ENCODE measurements at regions of chr14 and their contacts with region 1.

Region 1: DNA sequence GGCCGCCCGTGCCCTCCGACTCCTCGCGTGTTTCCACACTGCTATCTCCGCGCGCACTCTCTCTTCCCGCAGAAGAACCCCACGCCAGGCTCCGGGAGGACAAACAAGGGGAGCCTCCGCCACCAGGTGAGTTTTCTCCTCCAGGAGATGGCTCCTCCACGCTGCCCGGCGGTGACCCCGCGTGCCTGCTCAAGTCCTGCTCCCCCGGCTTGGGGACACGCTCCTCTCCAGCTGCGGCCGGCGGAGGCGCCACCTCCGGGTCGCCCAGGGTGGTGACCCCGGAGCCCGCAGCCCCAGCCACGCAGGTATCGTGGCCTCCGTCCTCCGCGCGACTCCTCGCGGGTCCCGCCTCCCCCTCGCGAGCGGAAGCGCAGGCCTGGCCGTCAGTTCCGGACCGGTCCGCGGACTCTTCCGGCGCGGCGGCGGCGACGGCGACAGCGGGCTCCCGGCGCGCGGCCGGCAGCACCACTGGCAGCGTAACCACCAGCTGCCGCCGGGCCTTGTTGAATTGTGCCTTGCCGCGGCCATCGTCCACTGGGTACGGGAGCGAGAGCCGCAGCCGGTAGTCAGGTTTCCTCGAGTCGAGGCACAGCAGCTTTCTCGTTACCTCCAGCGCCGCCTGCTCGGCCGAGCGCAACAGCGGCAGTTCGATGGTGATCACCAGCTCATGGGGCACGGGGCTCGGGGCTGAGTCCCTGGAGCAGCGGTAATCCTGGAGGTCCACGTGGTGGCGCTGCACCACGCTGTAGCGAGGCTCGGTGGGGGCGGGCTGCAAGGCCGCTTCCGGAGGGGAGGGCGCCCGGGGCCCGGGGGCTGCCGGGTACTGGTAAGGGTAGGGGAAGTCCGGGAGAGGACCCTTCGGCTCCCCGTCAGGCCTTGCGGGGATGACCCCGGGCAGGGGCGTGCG is 1.2 kb downstream of the DNAAF2 start:
- DNase-seq: peak; percentile 82 to 94
- H3K4me3 ChIP-seq: peak overlapping the region; percentile 89
- H3K27ac ChIP-seq: peak overlapping the region; percentile 89
- H3K4me1 ChIP-seq: peaks cover 36% of the 10 kb centered on the region
- H3K27me3 ChIP-seq: no peaks in the 10 kb centered on the region
- CTCF ChIP-seq: peak; percentile 74

Region 2: GRCh38 chr14:48771717-48772116 is 862.2 kb before region 1 on chr14:
- CTCF ChIA-PET with region 1: no interaction called
- POLR2A ChIA-PET with region 1: no interaction called
- intact Hi-C with region 1: no loop called
- DNase-seq: no peak
- H3K4me3 ChIP-seq: no peak overlapping the region
- H3K27ac ChIP-seq: no peak overlapping the region
- H3K4me1 ChIP-seq: no peaks in the 10 kb centered on the region
- H3K27me3 ChIP-seq: no peaks in the 10 kb centered on the region
- CTCF ChIP-seq: no peak

Region 3: GRCh38 chr14:49620182-49621113 is 13.4 kb before region 1 on chr14 and contains the starts of genes MGAT2 and RPL36AL:
- CTCF ChIA-PET with region 1: interaction called, 10 read pairs
- POLR2A ChIA-PET with region 1: interaction called, 3 read pairs
- intact Hi-C with region 1: no loop called
- DNase-seq: peak; percentile 92 to 98
- H3K4me3 ChIP-seq: peak within 1 kb of the TSS; percentile 100
- H3K27ac ChIP-seq: peak within 1 kb of the TSS; percentile 96
- H3K4me1 ChIP-seq: peaks cover 61% of the 10 kb centered on the region
- H3K27me3 ChIP-seq: no peaks in the 10 kb centered on the region
- CTCF ChIP-seq: no peak
- total RNA-seq, gene MGAT2: 18.9 and 22.0 TPM in 2 replicates
- total RNA-seq, gene RPL36AL: 120 and 151 TPM in 2 replicates

Region 4: DNA sequence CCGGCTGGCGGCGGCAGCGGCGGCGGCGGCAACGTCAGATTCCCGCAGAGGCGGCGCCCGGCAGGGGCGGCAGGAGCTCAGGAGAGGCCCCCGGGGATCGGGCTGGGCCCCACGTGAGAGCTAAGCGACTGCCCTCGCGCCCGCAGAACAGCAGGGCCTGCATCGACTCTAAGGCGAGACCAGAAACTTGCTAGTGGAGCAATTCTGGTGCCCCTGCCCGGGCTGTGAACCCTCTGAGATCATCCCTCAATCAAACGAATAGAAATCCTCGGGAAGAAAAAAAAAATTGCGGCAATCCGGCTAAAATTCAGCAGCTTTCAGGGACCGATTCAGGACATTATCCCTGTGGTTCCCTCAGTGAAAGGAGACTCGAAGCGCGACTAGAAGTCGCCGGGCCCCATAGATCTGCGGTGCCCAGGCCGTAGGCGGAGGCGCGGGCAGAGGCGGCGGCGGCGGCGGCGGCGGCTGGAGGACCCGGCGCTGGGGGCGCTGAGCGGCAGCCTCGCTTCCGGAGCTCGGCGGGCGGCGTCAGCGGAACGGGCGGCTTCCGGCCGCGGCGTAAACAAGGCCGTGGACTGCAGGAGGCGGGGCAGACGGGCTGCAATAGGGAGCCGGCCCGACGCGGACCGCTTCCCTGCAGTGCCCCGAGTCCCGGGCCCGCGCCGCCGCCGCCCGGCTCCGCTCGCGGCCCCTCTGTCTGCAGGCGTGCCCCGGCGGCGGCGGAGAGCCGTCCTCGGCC is 133.8 kb after region 1 on chr14 and contains the start of gene KLHDC2:
- CTCF ChIA-PET with region 1: interaction called, 10 read pairs
- POLR2A ChIA-PET with region 1: interaction called, 10 read pairs
- intact Hi-C with region 1: loop called (anchors 1 kb)
- DNase-seq: peak; percentile 71 to 90
- H3K4me3 ChIP-seq: peak within 1 kb of the TSS; percentile 100
- H3K27ac ChIP-seq: peak within 1 kb of the TSS; percentile 84
- H3K4me1 ChIP-seq: peaks cover 36% of the 10 kb centered on the region
- H3K27me3 ChIP-seq: no peaks in the 10 kb centered on the region
- CTCF ChIP-seq: 0 out of 2 replicates have a peak, but pooled peaks have one; percentile 10
- total RNA-seq, gene KLHDC2: 45.3 and 45.8 TPM in 2 replicates

Region 5: DNA sequence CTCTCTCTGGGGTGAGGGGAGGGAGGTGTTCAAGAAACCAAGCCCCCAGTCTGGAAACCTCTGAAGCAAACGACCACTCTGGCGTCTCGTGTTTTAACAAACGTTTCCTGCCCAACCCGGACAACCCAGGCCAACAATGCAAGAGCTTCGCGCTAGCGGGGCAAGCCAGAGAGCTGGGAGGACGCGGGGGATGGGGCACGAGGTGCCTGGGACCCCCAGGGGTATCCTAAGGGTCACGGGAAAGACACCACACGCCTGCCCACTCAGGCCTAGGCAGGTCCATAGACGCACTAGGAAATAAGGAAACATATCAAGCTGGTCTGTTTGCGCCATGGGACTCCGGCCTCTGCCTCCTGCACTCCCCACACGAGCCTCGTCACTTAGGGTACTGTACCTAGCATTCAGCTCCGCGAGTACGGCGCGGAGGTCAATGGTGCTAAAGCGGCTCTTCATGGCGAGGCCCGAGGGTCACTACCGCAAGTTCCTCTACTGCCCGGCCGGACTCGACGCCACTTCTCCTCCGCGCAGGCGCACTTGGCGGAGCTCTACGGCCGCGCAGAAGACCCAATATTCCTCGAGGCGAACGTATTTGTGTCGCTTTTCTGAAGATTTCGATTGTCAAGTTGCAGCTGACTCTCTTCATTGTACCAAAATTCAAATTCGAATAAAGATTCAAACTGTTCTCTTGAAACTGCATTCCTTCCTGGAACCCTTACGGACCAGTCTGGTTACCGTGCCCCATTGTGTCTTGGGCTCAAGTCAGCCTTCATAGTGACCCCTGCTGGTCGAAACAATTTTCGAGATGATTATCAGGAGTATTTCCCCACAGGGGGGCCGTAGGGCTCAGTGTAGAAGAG is 218.6 kb after region 1 on chr14 and contains the start of gene NEMF:
- CTCF ChIA-PET with region 1: interaction called, 11 read pairs
- POLR2A ChIA-PET with region 1: no interaction called
- intact Hi-C with region 1: loop called (anchors 5 kb)
- DNase-seq: peak; percentile 58 to 85
- H3K4me3 ChIP-seq: peak within 1 kb of the TSS; percentile 84
- H3K27ac ChIP-seq: peak within 1 kb of the TSS; percentile 53
- H3K4me1 ChIP-seq: peaks cover 32% of the 10 kb centered on the region
- H3K27me3 ChIP-seq: no peaks in the 10 kb centered on the region
- CTCF ChIP-seq: peak; percentile 89
- total RNA-seq, gene NEMF: 49.7 and 67.6 TPM in 2 replicates

Region 6: GRCh38 chr14:50311975-50312733 is 678.3 kb after region 1 on chr14 and contains the starts of genes DMAC2L and L2HGDH:
- CTCF ChIA-PET with region 1: interaction called, 14 read pairs
- POLR2A ChIA-PET with region 1: no interaction called
- intact Hi-C with region 1: no loop called
- DNase-seq: peak; percentile 83 to 95
- H3K4me3 ChIP-seq: peak within 1 kb of the TSS; percentile 85
- H3K27ac ChIP-seq: peak within 1 kb of the TSS; percentile 88
- H3K4me1 ChIP-seq: peaks cover 18% of the 10 kb centered on the region
- H3K27me3 ChIP-seq: no peaks in the 10 kb centered on the region
- CTCF ChIP-seq: peak; percentile 31
- total RNA-seq, gene DMAC2L: 15.4 and 18.5 TPM in 2 replicates
- total RNA-seq, gene L2HGDH: 15.5 and 18.6 TPM in 2 replicates

Region 7: DNA sequence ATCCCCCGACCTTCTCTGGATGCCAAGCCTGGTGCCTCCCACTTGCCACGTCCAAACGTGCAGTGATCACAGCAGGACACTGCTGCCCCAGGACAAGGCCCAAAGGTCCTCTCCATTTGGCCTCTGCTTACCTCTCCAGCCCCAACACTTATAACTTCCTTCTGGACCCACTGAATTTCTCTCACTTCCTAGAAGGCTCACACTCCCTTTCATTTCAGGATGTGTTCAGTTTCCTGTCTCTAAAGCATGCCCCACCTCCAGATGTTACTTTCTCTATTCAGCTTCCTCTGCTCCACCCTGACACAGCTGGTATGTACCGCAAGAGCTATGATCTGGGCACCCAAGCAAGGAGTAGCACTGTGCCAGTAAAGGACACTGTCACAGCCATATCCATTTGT is 729.8 kb after region 1 on chr14:
- CTCF ChIA-PET with region 1: no interaction called
- POLR2A ChIA-PET with region 1: no interaction called
- intact Hi-C with region 1: no loop called
- DNase-seq: no peak
- H3K4me3 ChIP-seq: no peak overlapping the region
- H3K27ac ChIP-seq: no peak overlapping the region
- H3K4me1 ChIP-seq: peaks cover 28% of the 10 kb centered on the region
- H3K27me3 ChIP-seq: no peaks in the 10 kb centered on the region
- CTCF ChIP-seq: no peak

Measured in PC-9 (cell line).